ENCODE measurements at regions of chr7 and their contacts with region 1.

Region 1: DNA sequence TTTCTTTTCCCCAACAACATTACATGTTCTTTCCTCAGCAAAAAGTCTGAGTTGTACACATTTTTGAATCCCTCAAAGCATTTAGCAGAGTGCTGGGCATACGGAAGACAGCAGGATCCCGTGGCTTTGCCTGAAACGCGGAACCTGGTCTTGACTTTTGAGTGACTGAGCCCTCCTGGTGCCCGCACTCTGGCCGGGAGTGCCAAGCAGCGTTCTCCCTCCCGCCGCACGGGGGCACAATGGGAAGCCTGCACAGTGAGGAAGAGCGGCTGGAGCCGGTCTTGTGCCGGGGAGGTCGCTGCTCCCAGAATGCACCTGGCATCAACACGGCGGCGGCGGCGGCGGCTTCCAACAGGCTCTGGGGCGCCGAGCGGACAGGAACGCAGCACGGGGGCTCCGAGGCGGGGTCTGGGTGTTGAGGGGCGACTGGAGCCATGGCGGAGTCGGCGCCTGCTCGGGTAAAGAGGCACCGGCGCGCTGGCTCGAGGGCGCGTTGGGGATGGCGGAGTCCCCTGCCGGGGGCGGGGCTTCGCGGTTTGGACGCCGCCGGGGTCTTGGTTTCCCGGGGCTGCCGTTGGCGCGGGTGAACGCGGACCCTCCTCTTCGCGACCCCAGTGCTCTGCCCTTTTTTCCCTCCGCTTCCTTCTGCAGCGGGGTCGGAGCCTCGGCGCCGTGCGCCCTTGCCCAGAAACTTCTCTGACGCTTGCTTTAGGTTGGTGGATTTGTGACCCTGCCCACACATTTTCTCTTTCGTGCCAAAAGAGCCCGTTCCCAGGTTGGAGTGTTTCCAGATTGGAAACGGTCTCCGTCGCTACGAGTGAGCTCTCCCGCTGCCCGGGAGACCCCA is at the start of gene ZNF212:
- DNase-seq: peak; percentile 81 to 93 (median 90)
- H3K4me3 ChIP-seq: peak within 1 kb of the TSS; percentile 57 to 100 (median 95)
- H3K27ac ChIP-seq: peak within 1 kb of the TSS in 51 of 59 donors; percentile 12 to 92 (median 66)
- H3K27me3 ChIP-seq: no peaks in the 10 kb centered on the region
- CTCF ChIP-seq: peak; percentile 81 to 99 (median 94)
- total RNA-seq, gene ZNF212: 7.7 to 14.7 (median 10.7) TPM

Region 2: DNA sequence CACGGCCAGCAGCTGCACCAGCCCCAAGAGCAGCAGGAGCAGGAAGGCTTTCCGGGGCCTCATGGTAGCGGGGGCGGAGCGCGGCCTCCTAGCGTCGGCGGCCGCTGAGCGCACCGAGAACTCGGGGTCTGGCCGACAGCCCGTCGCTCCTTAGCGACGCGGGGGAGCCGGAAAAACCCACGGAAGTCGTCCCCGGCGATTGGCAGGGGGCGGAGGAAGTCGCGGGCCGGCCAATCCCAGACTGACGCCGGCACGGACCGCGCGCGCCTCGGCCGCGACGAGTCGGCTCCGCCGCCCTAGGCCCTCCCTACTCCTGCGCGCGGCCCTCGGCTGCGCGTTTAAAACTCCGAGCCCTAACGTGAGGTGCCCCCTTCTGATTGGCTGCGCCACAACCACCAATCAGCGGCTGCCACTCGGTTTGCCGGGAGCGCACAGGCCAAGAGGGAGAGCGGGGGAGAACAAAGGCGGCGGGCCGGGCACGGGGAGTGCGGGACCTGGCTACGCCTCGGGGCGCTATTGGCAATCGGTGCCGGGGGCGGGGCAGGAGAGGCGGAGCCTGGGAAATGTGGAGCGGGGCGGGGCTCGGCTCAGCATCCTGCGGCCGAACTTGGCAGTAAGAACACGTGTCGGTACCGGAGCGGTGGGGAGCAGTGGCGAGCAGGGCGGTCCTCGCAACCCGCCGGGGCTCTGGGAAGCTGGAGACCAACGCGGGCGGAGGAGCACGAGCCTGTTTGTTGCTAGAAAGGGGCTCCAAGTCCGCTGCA is 211.0 kb before region 1 on chr7 and contains the start of gene PDIA4:
- intact Hi-C with region 1: no loop called
- DNase-seq: peak; percentile 99 to 100 (median 100)
- H3K4me3 ChIP-seq: peak within 1 kb of the TSS; percentile 68 to 99 (median 87)
- H3K27ac ChIP-seq: peak within 1 kb of the TSS in 58 of 59 donors; percentile 52 to 95 (median 87)
- H3K27me3 ChIP-seq: no peaks in the 10 kb centered on the region
- CTCF ChIP-seq: peak in 49 of 56 donors; percentile 2 to 63 (median 35)
- total RNA-seq, gene PDIA4: 17.6 to 81.7 (median 29.7) TPM

Region 3: DNA sequence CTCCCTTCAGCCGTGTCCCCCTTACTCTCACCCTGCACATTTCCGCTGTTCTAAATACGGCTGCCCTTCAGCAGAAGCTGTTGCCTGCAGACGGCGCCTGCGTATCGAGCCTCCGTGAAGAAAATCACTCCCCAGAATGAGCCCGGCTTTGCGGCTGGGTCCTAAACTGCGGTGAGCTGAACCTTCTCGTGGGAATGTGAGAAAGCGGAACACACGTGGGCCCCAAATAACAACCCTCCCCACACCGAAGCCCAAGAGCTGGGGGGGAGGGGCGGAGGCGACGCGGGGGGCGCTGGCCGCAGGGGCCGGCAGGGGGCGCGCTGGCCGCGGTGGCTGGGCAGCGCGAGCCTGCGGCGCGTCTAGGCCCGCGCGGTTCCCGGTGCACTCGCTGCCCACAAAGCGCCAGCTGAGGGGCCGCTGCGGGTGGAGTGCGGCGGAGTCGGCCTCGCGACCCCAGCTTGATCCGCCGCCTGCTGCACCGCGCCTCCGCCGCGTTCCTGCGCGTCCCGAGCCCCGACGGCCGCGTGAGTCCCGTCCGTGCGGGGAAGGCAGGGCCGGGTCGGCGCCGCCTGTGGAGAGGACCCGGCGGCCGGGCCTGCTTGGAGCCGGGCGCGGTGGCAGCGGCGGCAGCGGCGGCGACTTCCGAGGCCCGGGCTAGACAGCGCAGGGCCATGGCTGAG is 92.4 kb before region 1 on chr7 and contains the start of gene ZNF398:
- intact Hi-C with region 1: loop called in 1 of 2 experiments (anchors 1 kb)
- DNase-seq: peak; percentile 51 to 82 (median 71)
- H3K4me3 ChIP-seq: peak within 1 kb of the TSS; percentile 64 to 97 (median 85)
- H3K27ac ChIP-seq: peak within 1 kb of the TSS; percentile 62 to 95 (median 89)
- H3K27me3 ChIP-seq: no peaks in the 10 kb centered on the region
- CTCF ChIP-seq: peak; percentile 24 to 98 (median 70)
- total RNA-seq, gene ZNF398: 16.7 to 30.3 (median 24.1) TPM

Region 4: GRCh38 chr7:149195180-149196150 is 44.1 kb before region 1 on chr7 and contains the start of gene ZNF282:
- intact Hi-C with region 1: loop called in 1 of 2 experiments (anchors 5 kb)
- DNase-seq: peak; percentile 74 to 94 (median 92)
- H3K4me3 ChIP-seq: peak within 1 kb of the TSS; percentile 58 to 91 (median 81)
- H3K27ac ChIP-seq: peak within 1 kb of the TSS; percentile 58 to 96 (median 91)
- H3K27me3 ChIP-seq: no peaks in the 10 kb centered on the region
- CTCF ChIP-seq: peak; percentile 28 to 80 (median 64)
- total RNA-seq, gene ZNF282: 14.8 to 29.7 (median 20.7) TPM

Region 5: DNA sequence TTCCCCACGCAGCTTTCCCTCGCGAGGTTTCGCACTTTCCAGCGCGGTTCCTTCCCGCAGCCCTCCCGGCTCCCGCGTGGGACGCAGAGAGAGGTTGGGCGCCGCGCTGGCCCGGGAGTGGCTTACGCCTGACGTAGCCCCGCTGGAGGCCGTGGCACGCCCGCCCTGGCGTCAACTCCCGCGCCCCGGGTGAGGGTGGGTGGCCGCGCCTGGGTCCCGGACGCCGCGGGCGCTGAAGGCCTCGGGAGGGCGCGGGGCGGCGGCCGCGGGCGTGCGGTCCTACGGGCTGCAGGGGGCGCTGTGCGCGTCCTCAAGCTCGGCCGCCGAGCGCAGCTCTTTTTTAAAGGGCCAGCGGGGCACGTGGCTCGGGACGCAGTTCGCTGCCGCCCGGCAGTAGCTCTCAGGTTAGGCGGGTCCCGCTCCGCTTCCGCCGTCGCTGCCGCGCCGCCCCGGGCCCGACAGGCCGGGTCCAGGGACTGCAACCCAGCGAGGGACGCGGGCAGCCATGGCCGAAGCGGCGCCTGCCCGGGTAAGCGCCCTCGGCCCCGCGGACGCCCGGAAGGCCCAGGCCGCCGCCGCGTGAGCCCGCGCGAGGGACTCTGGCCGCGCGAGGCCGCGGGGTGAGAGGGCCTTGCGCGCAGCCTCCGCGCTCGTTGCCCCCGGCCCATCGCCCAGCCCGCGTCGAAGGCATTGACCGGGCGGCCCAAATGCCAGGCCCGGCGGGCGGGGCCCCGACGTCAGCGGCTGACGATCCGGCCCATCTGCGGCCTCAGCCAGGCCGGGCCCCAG is 22.5 kb after region 1 on chr7 and contains the start of gene ZNF783:
- intact Hi-C with region 1: loop called in 1 of 2 experiments (anchors 2 kb)
- DNase-seq: peak; percentile 77 to 90 (median 83)
- H3K4me3 ChIP-seq: peak within 1 kb of the TSS; percentile 47 to 87 (median 74)
- H3K27ac ChIP-seq: peak within 1 kb of the TSS; percentile 43 to 94 (median 88)
- H3K27me3 ChIP-seq: no peaks in the 10 kb centered on the region
- CTCF ChIP-seq: peak; percentile 47 to 99 (median 82)
- total RNA-seq, gene ZNF783: 15.2 to 39.8 (median 23.8) TPM